Right ventricle myocardium superior (tissue), 1 donor: ENCODE measurements at regions of chr3 and their contacts with region 1.

Region 1: GRCh38 chr3:73624821-73625665 is at the start of gene PDZRN3:
- DNase-seq: peak; percentile 78
- ATAC-seq: peak; percentile 44
- total RNA-seq, gene PDZRN3: 130 TPM

Region 2: DNA sequence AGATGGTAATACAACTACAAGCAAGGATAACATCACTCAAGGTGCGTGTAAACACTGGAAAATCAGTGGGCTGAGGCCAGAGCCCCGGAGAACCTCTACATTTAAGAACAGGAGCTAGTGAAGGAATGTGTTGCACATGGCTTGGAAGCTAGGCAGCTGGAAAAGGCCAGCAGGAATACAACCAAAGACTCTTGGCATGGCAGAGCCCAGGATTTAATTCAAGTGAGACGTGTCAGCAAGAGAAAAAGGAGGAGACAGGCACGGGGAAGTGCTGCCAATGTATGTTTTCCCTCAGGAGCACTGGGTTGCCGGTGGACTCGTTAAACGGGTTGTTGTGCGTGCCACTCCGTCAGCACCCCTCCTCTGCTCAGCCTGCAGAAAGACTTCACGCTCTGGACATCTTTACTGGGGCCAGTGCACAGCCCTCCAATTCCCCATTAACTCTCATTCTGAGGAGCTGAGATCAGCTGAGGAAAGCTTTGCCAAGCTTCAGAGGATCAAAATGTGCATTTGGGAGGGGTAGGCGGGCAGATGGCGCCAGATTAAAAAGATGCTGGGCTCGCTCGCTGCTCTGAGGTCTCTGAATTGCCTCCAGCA is 104.1 kb before region 1 on chr3:
- intact Hi-C with region 1: loop called (anchors 5 kb)
- DNase-seq: peak; percentile 62
- ATAC-seq: peak; percentile 76